ENCODE measurements at regions of chr5 and their contacts with region 1.

Region 1: GRCh38 chr5:98891591-98891990 is 37.2 kb downstream of the CHD1 start:
- DNase-seq: no peak
- ATAC-seq: no peak
- H3K4me3 ChIP-seq: no peak overlapping the region
- H3K4me3 Mint-ChIP-seq: no peak overlapping the region
- H3K27ac ChIP-seq: no peak overlapping the region
- H3K27ac Mint-ChIP-seq: peak overlapping the region in 1 of 9 donors; percentile 9
- H3K4me1 ChIP-seq: no peaks in the 10 kb centered on the region
- H3K4me1 Mint-ChIP-seq: peaks cover 0 to 9% (median 0%) of the 10 kb centered on the region in 7 donors
- H3K27me3 ChIP-seq: no peaks in the 10 kb centered on the region
- H3K27me3 Mint-ChIP-seq: no peaks in the 10 kb centered on the region

Region 2: GRCh38 chr5:98872674-98873073 is 18.9 kb before region 1 on chr5:
- CTCF ChIA-PET with region 1: no interaction called
- POLR2A ChIA-PET with region 1: no interaction called
- intact Hi-C with region 1: loop called (anchors 2 kb)
- DNase-seq: no peak
- ATAC-seq: no peak
- H3K4me3 ChIP-seq: no peak overlapping the region
- H3K4me3 Mint-ChIP-seq: no peak overlapping the region
- H3K27ac ChIP-seq: no peak overlapping the region
- H3K27ac Mint-ChIP-seq: peak overlapping the region in 1 of 9 donors; percentile 30
- H3K4me1 ChIP-seq: no peaks in the 10 kb centered on the region
- H3K4me1 Mint-ChIP-seq: peaks cover 2 to 17% (median 6%) of the 10 kb centered on the region in 7 donors
- H3K27me3 ChIP-seq: no peaks in the 10 kb centered on the region
- H3K27me3 Mint-ChIP-seq: no peaks in the 10 kb centered on the region

Region 3: GRCh38 chr5:98880151-98880550 is 11.4 kb before region 1 on chr5:
- CTCF ChIA-PET with region 1: no interaction called
- POLR2A ChIA-PET with region 1: interaction called, 5 read pairs
- intact Hi-C with region 1: loop called (anchors 2 kb)
- DNase-seq: no peak
- ATAC-seq: peak; percentile 56
- H3K4me3 ChIP-seq: no peak overlapping the region
- H3K4me3 Mint-ChIP-seq: no peak overlapping the region
- H3K27ac ChIP-seq: no peak overlapping the region
- H3K27ac Mint-ChIP-seq: peak overlapping the region in 1 of 9 donors; percentile 36
- H3K4me1 ChIP-seq: no peaks in the 10 kb centered on the region
- H3K4me1 Mint-ChIP-seq: peaks cover 3 to 19% (median 13%) of the 10 kb centered on the region in 7 donors
- H3K27me3 ChIP-seq: no peaks in the 10 kb centered on the region
- H3K27me3 Mint-ChIP-seq: no peaks in the 10 kb centered on the region

Measured in naive thymus-derived CD4-positive, alpha-beta T cell (primary cell).